ENCODE measurements at regions of chr6 and their contacts with region 1.

Region 1: GRCh38 chr6:1701668-1702353 is 92.1 kb downstream of the FOXC1 start:
- DNase-seq: no peak
- H3K4me3 ChIP-seq: no peak overlapping the region
- H3K27ac ChIP-seq: no peak overlapping the region
- H3K4me1 ChIP-seq: peaks cover 0 to 3% (median 0%) of the 10 kb centered on the region in 4 experiments; a peak in 1 of 7 replicates
- H3K27me3 ChIP-seq: no peaks in the 10 kb centered on the region
- CTCF ChIP-seq: no peak
- EP300 ChIP-seq: no peak
- POLR2A ChIP-seq: no peak
- RAD21 ChIP-seq: no peak

Region 2: GRCh38 chr6:1686117-1687098 is 15.4 kb before region 1 on chr6:
- CTCF ChIA-PET with region 1: interaction called, 31 read pairs
- POLR2A ChIA-PET with region 1: interaction called, 4 read pairs
- DNase-seq: no peak
- H3K4me3 ChIP-seq: no peak overlapping the region
- H3K27ac ChIP-seq: no peak overlapping the region
- H3K4me1 ChIP-seq: no peaks in the 10 kb centered on the region; a peak in 1 of 7 replicates
- H3K27me3 ChIP-seq: no peaks in the 10 kb centered on the region
- CTCF ChIP-seq: peak in 1 of 3 experiments; percentile 5; a peak in 1 of 4 replicates
- EP300 ChIP-seq: no peak
- POLR2A ChIP-seq: no peak
- RAD21 ChIP-seq: no peak